HEK293 (cell line): ENCODE measurements at regions of chr16 and their contacts with region 1.

Region 1: GRCh38 chr16:3158471-3159314 is 23.9 kb downstream of the ZNF213 start:
- H3K4me3 ChIP-seq: peak overlapping the region; percentile 60
- H3K27ac ChIP-seq: peak overlapping the region; percentile 91
- H3K4me1 ChIP-seq: no peaks in the 10 kb centered on the region
- CTCF ChIP-seq: 0 out of 2 replicates have a peak, but pooled peaks have one; percentile 32

Region 2: GRCh38 chr16:3099732-3100499 is 58.8 kb before region 1 on chr16:
- CTCF ChIA-PET with region 1: interaction called, 7 read pairs
- POLR2A ChIA-PET with region 1: interaction called, 10 read pairs
- H3K4me3 ChIP-seq: no peak overlapping the region
- H3K27ac ChIP-seq: no peak overlapping the region
- H3K4me1 ChIP-seq: peaks cover 3% of the 10 kb centered on the region
- CTCF ChIP-seq: no peak

Region 3: GRCh38 chr16:3173892-3174617 is 15.4 kb after region 1 on chr16:
- CTCF ChIA-PET with region 1: interaction called, 9 read pairs
- POLR2A ChIA-PET with region 1: interaction called, 23 read pairs
- H3K4me3 ChIP-seq: no peak overlapping the region
- H3K27ac ChIP-seq: no peak overlapping the region
- H3K4me1 ChIP-seq: no peaks in the 10 kb centered on the region
- CTCF ChIP-seq: peak; percentile 66

Region 4: GRCh38 chr16:3182608-3183444 is 24.1 kb after region 1 on chr16:
- CTCF ChIA-PET with region 1: interaction called, 3 read pairs
- POLR2A ChIA-PET with region 1: interaction called, 15 read pairs
- H3K4me3 ChIP-seq: peak overlapping the region; percentile 52
- H3K27ac ChIP-seq: peak overlapping the region; percentile 35; the same call in 1 of the 2 replicates
- H3K4me1 ChIP-seq: no peaks in the 10 kb centered on the region
- CTCF ChIP-seq: peak; percentile 86